Transverse colon (tissue), 4 donors: ENCODE measurements at regions of chr4 and their contacts with region 1.

Region 1: DNA sequence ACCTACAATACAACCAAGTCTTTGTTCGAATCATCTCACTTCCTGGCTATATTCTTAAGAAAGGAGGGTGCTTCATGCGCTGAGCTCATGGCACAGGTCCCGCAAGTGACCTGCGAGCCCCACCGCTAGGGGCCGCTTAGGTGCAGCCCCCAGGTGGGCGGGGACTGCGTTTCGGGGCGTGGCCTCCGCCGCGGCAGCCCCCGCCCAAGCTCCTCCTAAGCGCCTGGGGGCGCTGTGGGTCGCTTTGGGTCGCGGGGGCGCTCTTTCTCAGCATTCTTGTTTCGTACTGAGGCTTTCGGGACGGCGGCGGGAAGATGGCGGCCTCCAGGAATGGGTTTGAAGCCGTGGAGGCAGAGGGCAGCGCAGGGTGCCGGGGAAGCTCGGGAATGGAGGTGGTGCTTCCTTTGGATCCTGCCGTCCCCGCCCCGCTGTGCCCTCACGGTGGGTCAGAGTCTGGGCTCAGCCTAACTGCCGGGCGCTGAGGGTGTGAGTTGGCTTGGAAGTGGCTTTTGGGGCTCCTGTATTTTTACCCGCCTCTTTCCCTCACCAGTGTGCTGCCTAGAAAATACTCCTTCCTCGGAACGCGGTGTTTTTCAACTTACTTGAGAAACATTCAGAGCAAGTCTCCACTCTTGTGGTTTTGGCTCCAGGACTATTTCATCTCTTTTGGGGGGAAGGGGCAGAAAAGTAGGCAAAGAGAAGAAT is at the start of gene ZCCHC4:
- DNase-seq: peak; percentile 92
- H3K4me3 ChIP-seq: peak within 1 kb of the TSS; percentile 33 to 84 (median 66)
- H3K27ac ChIP-seq: peak within 1 kb of the TSS; percentile 77 to 90 (median 84)
- H3K4me1 ChIP-seq: peaks cover 6 to 13% (median 8%) of the 10 kb centered on the region in 4 donors
- H3K27me3 ChIP-seq: no peaks in the 10 kb centered on the region
- CTCF ChIP-seq: peak; percentile 92 to 99 (median 97)
- EP300 ChIP-seq: no peak
- POLR2A ChIP-seq: peak; percentile 64
- total RNA-seq, gene ZCCHC4: 11.2 to 21.7 (median 14.3) TPM

Region 2: GRCh38 chr4:25223802-25224375 is 88.8 kb before region 1 on chr4:
- in situ Hi-C with region 1: loop called in 1 of 4 experiments (anchors 25 kb)
- intact Hi-C with region 1: no loop called
- DNase-seq: no peak
- H3K4me3 ChIP-seq: no peak overlapping the region
- H3K27ac ChIP-seq: no peak overlapping the region
- H3K4me1 ChIP-seq: no peaks in the 10 kb centered on the region
- H3K27me3 ChIP-seq: no peaks in the 10 kb centered on the region
- CTCF ChIP-seq: no peak
- EP300 ChIP-seq: no peak
- POLR2A ChIP-seq: no peak

Region 3: GRCh38 chr4:25421816-25422525 is 109.3 kb after region 1 on chr4:
- in situ Hi-C with region 1: no loop called
- intact Hi-C with region 1: no loop called
- DNase-seq: peak; percentile 18
- H3K4me3 ChIP-seq: peak overlapping the region in 1 of 4 donors; percentile 13
- H3K27ac ChIP-seq: peak overlapping the region; percentile 10 to 56 (median 40)
- H3K4me1 ChIP-seq: peaks cover 0 to 11% (median 6%) of the 10 kb centered on the region in 4 donors
- H3K27me3 ChIP-seq: no peaks in the 10 kb centered on the region
- CTCF ChIP-seq: no peak
- EP300 ChIP-seq: no peak
- POLR2A ChIP-seq: no peak